ENCODE measurements at regions of chr1 and their contacts with region 1.

Region 1: GRCh38 chr1:26102526-26102925 is 9.1 kb upstream of the PDIK1L start:
- H3K4me3 Mint-ChIP-seq: no peak overlapping the region
- H3K27ac Mint-ChIP-seq: no peak overlapping the region
- H3K4me1 Mint-ChIP-seq: peaks cover 7% of the 10 kb centered on the region
- H3K27me3 Mint-ChIP-seq: peaks cover 17% of the 10 kb centered on the region

Region 2: DNA sequence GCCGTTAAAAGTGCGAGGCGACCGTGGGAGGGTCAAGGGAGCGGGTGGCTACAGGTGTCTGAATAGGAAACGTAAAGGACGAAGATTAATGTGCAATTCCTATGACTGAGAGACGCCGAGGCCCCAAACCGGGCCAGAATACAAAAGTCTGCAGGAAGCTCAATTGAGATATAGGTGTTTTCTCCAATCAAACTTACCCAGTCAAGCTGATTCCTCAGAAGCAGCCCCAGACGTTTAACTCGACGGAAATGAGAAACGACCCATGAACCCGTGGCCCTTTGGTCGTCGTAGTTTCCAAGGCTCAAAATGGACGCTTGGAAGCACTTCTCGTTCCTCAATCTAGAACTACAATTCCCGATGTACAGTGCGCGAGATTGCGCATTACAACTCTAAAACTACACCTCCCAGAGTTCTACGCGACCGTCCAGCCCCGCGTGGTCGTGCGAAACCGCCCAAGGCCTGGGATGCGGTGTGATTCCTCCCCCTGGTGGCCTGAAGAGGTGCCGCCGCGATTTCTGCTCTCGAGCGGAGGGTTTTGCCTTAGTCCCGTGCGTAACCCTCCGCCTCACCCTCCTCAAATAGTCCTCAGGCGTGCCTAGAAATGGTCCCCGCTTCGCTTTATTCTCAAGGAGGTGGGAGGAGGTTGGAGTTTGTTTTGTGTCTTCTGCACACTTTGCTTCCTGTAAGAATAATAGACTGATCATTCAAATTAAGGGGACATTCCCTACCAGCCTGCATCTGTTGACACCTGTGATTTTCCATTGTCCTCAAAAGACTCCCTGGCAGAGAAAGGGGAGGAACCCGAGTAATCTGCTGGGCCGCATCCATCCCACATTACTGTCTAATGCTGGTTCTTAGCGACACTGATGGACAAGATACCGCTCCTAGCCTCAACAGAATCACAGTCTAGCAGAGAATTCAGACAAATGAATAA is 104.4 kb before region 1 on chr1 and contains the start of gene PAFAH2:
- intact Hi-C with region 1: no loop called
- H3K4me3 Mint-ChIP-seq: peak within 1 kb of the TSS; percentile 97
- H3K27ac Mint-ChIP-seq: peak within 1 kb of the TSS; percentile 97
- H3K4me1 Mint-ChIP-seq: peaks cover 38% of the 10 kb centered on the region
- H3K27me3 Mint-ChIP-seq: no peaks in the 10 kb centered on the region

Region 3: DNA sequence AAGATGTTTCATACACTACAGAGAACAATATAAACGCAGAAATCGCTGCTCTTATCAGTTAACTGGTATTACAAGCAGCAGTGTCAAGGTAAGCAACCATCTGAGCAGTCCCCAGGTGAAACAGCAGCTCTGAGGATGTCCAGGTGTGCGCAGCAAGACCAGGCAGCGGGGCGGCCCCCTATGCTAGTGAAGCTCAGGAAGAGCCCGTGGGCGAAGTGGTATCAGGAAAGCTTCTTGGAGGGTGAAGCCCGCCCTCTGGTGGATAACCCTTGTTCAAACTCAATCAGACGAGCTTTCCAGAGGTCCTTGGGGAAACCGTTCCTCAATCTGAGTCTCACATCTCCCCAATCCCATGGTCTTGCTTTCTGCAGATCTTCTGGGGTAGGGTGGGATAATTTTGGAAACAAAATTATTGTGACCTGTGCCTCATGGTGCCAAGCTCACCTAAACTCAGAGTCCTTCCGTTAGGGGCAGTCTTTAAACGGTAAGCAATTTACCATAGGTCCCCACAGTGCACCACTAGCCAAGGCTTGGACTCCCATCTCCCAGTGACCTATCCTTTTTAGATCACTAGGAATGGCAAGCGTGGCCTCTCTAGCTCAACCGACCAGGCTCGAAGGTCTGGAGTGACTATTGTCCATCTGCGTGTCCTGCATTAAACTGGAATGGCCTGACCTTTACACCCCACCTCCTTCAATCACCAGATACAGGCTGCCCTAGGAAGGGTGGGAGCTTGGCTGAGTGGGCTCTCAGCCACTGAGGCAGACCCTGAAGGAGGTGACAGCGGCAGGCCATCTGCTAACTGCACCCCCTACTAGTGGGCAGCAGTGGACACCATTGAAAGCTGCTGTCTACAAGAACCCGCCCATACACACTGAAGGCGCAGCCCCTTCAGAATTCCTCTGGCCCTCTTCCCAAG is 42.8 kb after region 1 on chr1:
- intact Hi-C with region 1: loop called (anchors 1 kb)
- H3K4me3 Mint-ChIP-seq: no peak overlapping the region
- H3K27ac Mint-ChIP-seq: no peak overlapping the region
- H3K4me1 Mint-ChIP-seq: peaks cover 18% of the 10 kb centered on the region
- H3K27me3 Mint-ChIP-seq: peaks cover 19% of the 10 kb centered on the region

Region 4: GRCh38 chr1:26191739-26192138 is 89.2 kb after region 1 on chr1:
- intact Hi-C with region 1: no loop called
- H3K4me3 Mint-ChIP-seq: no peak overlapping the region
- H3K27ac Mint-ChIP-seq: no peak overlapping the region
- H3K4me1 Mint-ChIP-seq: no peaks in the 10 kb centered on the region
- H3K27me3 Mint-ChIP-seq: peaks cover 10% of the 10 kb centered on the region